ENCODE measurements at regions of chr11 and their contacts with region 1.

Region 1: DNA sequence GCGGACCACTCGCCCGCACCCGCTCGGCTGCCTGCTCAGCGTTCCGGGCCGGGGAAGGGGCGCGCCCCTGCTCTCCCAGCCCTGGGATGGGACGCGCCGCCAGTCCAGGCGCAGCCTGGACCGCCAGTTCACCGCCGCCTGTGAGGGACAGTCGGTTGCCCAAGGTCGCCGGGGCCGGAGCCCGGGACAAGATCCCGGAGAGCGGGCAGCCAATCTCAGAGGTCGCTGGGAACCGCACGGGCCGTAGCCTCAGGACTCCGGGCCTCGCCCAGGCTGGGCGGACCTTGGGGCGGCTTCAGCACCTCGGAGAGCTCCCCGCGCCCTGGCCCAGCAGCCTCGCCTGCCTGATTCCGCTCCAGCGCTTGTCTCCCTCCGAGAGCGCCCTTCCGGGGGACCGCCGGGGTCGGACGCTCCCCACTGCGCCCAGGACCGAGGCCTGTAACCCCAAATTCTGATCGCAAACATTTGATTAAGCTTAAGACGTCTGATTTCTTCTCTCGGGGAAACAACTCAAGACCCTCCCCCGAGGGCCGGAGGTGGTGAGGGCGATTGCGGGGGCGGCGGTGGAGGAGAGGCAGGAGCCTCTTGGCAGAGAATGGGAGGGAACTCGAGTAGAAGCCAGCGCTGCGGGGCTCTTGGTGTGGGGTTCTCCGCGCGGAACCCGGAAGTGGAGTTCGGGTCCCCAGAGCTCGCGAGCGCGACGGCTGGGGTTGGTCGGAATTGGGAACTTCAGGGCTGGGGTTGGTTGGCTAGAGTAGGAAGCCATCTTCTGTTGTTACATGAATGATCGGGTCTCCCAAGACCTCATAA is 1.1 kb upstream of the CHRM4 start:
- DNase-seq: no peak
- H3K4me3 ChIP-seq: peak overlapping the region; percentile 48 to 57 (median 50)
- H3K27ac ChIP-seq: no peak overlapping the region
- H3K4me1 ChIP-seq: peaks cover 34 to 47% (median 44%) of the 10 kb centered on the region in 4 donors
- H3K27me3 ChIP-seq: peaks cover 25 to 57% (median 38%) of the 10 kb centered on the region in 4 donors
- CTCF ChIP-seq: no peak
- EP300 ChIP-seq: no peak
- POLR2A ChIP-seq: no peak

Region 2: GRCh38 chr11:46529095-46529905 is 136.7 kb after region 1 on chr11:
- intact Hi-C with region 1: loop called (anchors 5 kb)
- DNase-seq: peak; percentile 93
- H3K4me3 ChIP-seq: no peak overlapping the region
- H3K27ac ChIP-seq: no peak overlapping the region
- H3K4me1 ChIP-seq: peaks cover 14 to 23% (median 18%) of the 10 kb centered on the region in 4 donors
- H3K27me3 ChIP-seq: no peaks in the 10 kb centered on the region
- CTCF ChIP-seq: peak; percentile 78 to 93 (median 88)
- EP300 ChIP-seq: no peak
- POLR2A ChIP-seq: no peak

Region 3: DNA sequence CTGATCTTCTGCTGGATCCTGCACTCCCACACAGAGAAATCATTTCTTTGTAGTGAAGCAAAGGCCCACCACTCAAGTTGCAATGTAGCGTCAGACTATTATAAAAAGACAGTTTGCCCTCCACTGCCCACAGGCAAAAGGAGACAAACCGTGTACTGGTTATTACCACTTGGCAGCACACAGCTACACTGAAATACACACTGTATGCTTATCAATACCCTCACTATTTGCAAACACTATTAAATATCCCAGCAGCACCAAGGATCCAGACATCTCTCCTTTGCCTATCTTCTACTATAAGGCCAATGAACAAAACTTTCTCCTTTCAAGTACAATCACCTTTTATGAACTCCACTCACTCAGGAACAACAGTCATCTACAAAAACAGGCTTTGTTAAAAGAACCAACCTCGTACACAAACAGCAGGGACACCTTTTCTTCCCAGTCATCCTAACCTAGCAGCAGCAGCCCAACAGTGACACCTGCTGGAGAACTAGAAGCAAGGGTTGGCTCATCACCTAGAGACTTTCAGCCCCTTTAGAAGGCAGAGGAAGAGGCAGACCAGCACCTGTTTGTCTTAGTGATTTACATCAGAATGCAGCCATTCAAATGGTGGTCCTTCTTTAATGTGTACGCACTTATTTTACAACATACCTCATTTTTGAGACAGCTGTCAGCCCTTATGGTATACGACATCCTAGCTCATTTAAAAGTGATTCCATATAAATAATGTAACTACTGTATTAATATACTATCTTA is 145.1 kb after region 1 on chr11:
- intact Hi-C with region 1: loop called (anchors 2 kb)
- DNase-seq: no peak
- H3K4me3 ChIP-seq: no peak overlapping the region
- H3K27ac ChIP-seq: no peak overlapping the region
- H3K4me1 ChIP-seq: peaks cover 0 to 27% (median 9%) of the 10 kb centered on the region in 4 donors
- H3K27me3 ChIP-seq: no peaks in the 10 kb centered on the region
- CTCF ChIP-seq: peak; percentile 72 to 87 (median 76)
- EP300 ChIP-seq: no peak
- POLR2A ChIP-seq: no peak

Region 4: DNA sequence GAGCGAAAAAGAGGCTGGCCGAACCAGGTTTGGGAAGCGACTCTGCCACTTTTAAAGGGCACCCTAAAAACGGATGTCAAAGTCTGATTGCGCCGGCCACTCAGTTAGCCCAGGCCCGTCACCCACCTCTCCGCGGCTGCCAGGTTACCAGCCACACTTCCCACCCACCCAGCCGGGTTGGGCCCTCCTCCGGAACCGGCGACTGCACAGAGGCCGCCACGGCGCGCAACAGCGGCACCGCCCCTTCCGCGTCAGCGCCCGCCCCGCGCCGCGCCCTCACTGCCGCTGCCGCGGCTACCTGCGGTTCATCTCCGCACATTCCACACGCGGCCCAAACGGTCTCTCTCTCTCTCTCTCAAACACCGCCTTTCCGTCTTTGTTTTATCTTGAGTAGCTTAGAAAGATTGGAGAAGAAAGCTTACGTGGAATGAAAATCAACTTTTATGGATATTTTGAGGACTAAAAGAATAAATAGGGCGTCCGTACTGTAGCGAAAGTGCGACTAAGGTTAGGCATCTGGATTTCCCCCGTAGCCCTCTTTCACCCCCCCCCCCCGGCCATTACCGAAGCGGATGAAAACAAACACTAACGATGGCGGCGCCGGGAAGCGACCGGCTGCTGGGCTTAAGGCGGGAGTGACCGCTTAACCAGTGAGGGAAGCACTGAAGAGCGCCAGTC is 224.5 kb after region 1 on chr11 and contains the starts of genes ATG13 and HARBI1:
- intact Hi-C with region 1: loop called (anchors 2 kb)
- DNase-seq: peak; percentile 96
- H3K4me3 ChIP-seq: peak within 1 kb of the TSS; percentile 66 to 92 (median 86)
- H3K27ac ChIP-seq: peak within 1 kb of the TSS; percentile 90 to 97 (median 96)
- H3K4me1 ChIP-seq: peaks cover 18 to 65% (median 58%) of the 10 kb centered on the region in 4 donors
- H3K27me3 ChIP-seq: no peaks in the 10 kb centered on the region
- CTCF ChIP-seq: no peak
- EP300 ChIP-seq: no peak
- POLR2A ChIP-seq: peak; percentile 40
- total RNA-seq, gene ATG13: 68.7 to 74.3 (median 72.1) TPM
- total RNA-seq, gene HARBI1: 2.5 to 3.3 (median 3.0) TPM